Cardiac septum (tissue), 1 donor: ENCODE measurements at regions of chr7 and their contacts with region 1.

Region 1: DNA sequence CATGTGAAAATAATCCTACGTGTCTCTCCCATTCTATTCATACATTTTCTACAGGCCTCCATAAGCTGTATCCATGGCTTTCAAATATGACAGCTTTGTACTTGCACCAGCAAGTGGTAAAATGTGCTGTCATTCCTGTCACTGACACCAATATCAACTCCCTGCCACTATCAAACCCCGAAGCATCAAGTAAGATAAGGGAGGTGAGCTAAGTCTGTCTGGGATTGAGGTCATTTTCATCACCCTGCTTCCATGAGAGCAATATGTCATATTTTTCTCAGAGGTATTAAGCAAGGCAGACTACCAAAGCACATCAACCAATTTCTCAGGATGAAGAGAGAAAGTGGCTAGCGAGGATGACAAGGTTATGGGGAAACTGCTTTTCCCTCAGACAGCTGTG is 11.1 kb downstream of the GPR22 start:
- DNase-seq: no peak

Region 2: DNA sequence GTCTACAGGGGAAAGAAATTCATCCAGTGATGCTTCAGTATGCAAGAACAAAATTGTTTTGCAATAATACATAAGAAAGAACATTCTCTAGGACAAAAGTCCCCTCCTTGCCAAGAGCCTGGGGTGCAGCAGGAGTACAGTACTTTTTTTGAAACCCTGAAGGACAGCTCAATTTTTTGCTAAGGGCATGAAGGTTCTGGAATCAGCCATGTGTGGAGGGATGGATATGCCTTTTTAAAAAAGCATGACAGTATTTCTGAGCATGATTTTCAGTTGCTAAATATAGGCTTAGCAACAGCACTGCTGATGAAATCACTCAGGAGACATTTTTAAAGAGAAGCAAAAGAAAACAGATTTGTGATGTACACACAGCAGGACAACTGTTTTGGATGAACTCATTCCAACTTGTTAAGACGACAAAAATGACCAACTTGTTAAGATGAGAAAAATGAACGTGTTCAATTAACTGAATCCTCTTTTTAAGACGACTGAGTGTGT is 272.9 kb before region 1 on chr7:
- intact Hi-C with region 1: loop called (anchors 5 kb)
- DNase-seq: no peak